Head of caudate nucleus (tissue), 42 donors: ENCODE measurements at regions of chr4 and their contacts with region 1.

Region 1: GRCh38 chr4:184538023-184538599 is 63.8 kb upstream of the IRF2 start:
- DNase-seq: peak; percentile 68 to 95 (median 88)

Region 2: GRCh38 chr4:184343502-184344177 is 194.5 kb before region 1 on chr4:
- intact Hi-C with region 1: loop called (anchors 5 kb)
- DNase-seq: peak; percentile 61 to 95 (median 84)

Region 3: GRCh38 chr4:184384056-184384809 is 153.9 kb before region 1 on chr4:
- intact Hi-C with region 1: loop called (anchors 10 kb)
- DNase-seq: peak in 5 of 42 donors; percentile 14 to 30 (median 27)

Region 4: GRCh38 chr4:184474263-184475095 is 63.6 kb before region 1 on chr4 and contains the start of gene IRF2:
- intact Hi-C with region 1: loop called (anchors 2 kb)
- DNase-seq: peak; percentile 87 to 99 (median 96)